CD8-positive, alpha-beta T cell (primary cell): ENCODE measurements at regions of chr14 and their contacts with region 1.

Region 1: GRCh38 chr14:47466916-47467315 is 208.5 kb downstream of the MDGA2 start:
- DNase-seq: no peak
- ATAC-seq: no peak
- H3K4me3 ChIP-seq: no peak overlapping the region
- H3K4me3 Mint-ChIP-seq: no peak overlapping the region
- H3K27ac ChIP-seq: no peak overlapping the region
- H3K27ac Mint-ChIP-seq: no peak overlapping the region
- H3K4me1 ChIP-seq: no peaks in the 10 kb centered on the region
- H3K4me1 Mint-ChIP-seq: no peaks in the 10 kb centered on the region
- H3K27me3 ChIP-seq: no peaks in the 10 kb centered on the region
- H3K27me3 Mint-ChIP-seq: no peaks in the 10 kb centered on the region
- CTCF ChIP-seq: no peak

Region 2: DNA sequence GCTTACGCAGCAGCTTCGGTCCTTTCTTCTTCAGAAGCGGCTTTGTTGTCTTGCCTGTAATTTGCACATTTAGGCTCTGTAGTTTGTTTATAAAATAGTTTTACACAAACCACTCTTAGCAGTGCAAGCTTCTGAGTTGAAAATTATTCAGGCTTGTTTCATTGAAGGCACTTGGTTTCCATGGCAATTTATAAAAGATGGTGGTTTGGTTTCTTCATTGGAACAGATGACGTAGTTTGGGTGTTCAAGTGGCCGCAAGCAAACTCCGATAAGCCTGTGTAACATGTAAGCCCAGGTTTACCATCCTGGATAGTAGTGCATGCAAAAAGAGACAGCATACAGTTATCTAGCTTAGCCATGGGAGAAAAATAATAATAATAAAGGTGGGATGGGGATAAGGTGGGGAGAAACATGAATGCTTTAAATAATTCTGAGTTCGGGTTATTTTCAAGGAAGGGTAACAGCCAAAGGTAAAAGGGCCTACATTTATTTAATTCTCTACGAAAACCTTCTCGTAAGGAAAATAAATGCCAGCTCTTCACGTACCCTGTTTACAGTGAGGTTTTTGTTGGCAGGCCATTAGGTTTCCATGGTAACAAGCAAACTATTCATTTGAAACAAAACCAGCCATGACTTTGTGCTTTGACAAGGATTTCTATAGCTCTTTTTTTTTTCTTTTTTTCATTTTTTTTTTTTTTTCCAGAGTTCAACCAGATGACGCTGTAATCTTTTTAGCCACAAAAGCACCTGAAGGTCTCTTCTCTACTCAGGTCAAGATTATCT is 625.8 kb before region 1 on chr14:
- CTCF ChIA-PET with region 1: no interaction called
- POLR2A ChIA-PET with region 1: no interaction called
- intact Hi-C with region 1: loop called in 1 of 2 experiments (anchors 5 kb)
- DNase-seq: no peak
- ATAC-seq: no peak
- H3K4me3 ChIP-seq: no peak overlapping the region
- H3K4me3 Mint-ChIP-seq: no peak overlapping the region
- H3K27ac ChIP-seq: no peak overlapping the region
- H3K27ac Mint-ChIP-seq: no peak overlapping the region
- H3K4me1 ChIP-seq: no peaks in the 10 kb centered on the region
- H3K4me1 Mint-ChIP-seq: no peaks in the 10 kb centered on the region
- H3K27me3 ChIP-seq: no peaks in the 10 kb centered on the region
- H3K27me3 Mint-ChIP-seq: no peaks in the 10 kb centered on the region
- CTCF ChIP-seq: no peak

Region 3: DNA sequence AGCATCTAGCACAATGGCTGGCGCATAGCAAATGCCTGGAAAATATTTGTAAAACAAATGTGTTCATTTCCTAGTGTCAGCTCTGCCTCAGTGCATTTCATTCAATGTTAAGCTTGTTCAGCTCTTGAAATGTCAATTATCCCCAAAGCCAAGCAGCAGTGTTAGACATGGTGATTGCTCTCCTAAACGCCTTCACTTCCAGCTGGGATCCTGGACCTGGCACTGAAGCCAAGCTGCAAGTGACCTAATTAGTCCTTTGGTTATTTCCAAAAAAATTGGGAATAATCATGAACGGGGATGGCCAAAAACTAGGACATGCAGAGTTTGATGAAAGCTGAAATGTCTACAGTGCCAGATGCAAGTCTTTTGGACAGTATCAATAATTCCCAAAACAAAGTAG is 263.4 kb after region 1 on chr14:
- CTCF ChIA-PET with region 1: no interaction called
- POLR2A ChIA-PET with region 1: no interaction called
- intact Hi-C with region 1: no loop called
- DNase-seq: no peak
- ATAC-seq: no peak
- H3K4me3 ChIP-seq: no peak overlapping the region
- H3K4me3 Mint-ChIP-seq: no peak overlapping the region
- H3K27ac ChIP-seq: no peak overlapping the region
- H3K27ac Mint-ChIP-seq: no peak overlapping the region
- H3K4me1 ChIP-seq: no peaks in the 10 kb centered on the region
- H3K4me1 Mint-ChIP-seq: no peaks in the 10 kb centered on the region
- H3K27me3 ChIP-seq: no peaks in the 10 kb centered on the region
- H3K27me3 Mint-ChIP-seq: no peaks in the 10 kb centered on the region
- CTCF ChIP-seq: no peak